Endothelial cell of umbilical vein (primary cell): ENCODE measurements at regions of chr14 and their contacts with region 1.

Region 1: DNA sequence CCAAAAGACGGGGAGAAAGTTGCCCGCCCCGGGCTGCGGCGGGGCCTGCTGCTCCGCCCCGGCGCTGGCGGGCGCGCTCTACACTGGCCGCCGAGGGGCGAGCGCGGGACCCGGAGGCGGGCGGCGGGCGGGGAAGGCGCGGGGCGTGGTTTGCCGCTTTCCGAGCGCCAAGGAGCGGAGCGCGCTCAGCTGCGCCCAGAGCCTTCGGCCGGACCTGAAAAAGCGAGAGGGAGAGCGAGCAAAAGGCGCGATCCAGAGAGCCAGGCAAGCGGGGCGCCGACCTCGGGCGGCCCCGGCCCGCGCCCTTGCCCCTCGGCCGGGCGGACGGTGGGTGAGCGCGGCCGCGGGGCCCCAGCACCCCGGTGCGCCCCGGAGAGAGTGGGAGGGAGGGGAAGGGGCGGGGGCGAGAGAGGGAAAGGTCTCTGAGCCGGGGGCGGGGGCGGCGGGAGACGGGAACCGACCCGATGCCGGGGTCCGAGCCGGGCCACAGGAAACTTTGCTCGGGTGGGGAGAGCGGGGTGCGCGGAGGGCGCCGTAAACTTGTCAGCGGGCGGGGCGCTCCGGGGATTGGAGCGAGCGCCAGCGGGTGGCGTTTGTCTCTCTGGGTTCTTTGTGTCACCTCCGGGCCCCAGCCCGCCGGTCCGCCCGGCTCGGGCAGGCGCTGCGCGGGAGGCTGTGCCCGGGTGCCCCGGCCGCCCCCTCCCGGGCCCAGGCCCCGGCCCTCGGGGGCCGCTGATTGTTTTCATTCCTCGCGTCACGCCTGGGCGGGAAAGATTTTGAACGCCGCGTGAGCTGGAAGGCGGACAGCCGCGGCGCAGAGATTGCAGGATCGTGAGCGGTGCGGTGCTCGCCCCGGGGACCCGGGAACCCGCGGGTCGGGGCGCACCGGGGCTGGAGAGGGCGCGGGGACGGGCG is at the start of gene SYNE2:
- DNase-seq: peak; percentile 78
- H3K4me3 ChIP-seq: peak within 1 kb of the TSS; percentile 66 to 77 (median 77)
- H3K27ac ChIP-seq: peak within 1 kb of the TSS; percentile 66
- H3K4me1 ChIP-seq: peaks cover 15% of the 10 kb centered on the region
- H3K27me3 ChIP-seq: no peaks in the 10 kb centered on the region
- CTCF ChIP-seq: peak in 1 of 2 donors; percentile 17
- POLR2A ChIP-seq: peak; percentile 14
- total RNA-seq, gene SYNE2: 42.7 and 53.7 TPM in 2 replicates

Region 2: GRCh38 chr14:63793376-63793775 is 59.7 kb before region 1 on chr14:
- CTCF ChIA-PET with region 1: no interaction called
- POLR2A ChIA-PET with region 1: no interaction called
- dilution Hi-C with region 1: no loop called
- intact Hi-C with region 1: no loop called
- DNase-seq: no peak
- H3K4me3 ChIP-seq: no peak overlapping the region
- H3K27ac ChIP-seq: no peak overlapping the region
- H3K4me1 ChIP-seq: no peaks in the 10 kb centered on the region
- H3K27me3 ChIP-seq: peaks cover 0 to 3% of the 10 kb centered on the region in 2 experiments
- CTCF ChIP-seq: no peak
- POLR2A ChIP-seq: no peak

Region 3: DNA sequence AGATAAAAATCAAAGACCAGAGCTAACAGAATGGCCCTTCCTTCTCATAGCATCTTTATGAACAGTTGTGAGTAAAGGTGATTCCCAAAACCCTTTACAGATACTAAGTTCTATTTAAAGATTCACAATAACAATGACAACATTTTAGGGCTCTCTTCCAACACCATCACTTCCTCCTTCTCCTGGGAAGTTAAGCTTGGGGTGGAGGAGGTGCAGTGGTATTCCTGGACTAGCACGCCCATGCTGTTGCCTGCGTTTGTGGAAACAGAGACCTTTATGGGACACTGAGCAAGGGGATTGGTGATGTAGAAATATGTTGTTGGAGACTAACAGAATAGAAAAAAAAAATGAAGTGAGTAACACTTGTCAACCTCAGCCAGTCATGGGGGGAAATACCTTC is 22.2 kb after region 1 on chr14:
- CTCF ChIA-PET with region 1: no interaction called
- POLR2A ChIA-PET with region 1: no interaction called
- dilution Hi-C with region 1: no loop called
- intact Hi-C with region 1: no loop called
- DNase-seq: peak; percentile 54
- H3K4me3 ChIP-seq: no peak overlapping the region
- H3K27ac ChIP-seq: no peak overlapping the region
- H3K4me1 ChIP-seq: peaks cover 8% of the 10 kb centered on the region
- H3K27me3 ChIP-seq: no peaks in the 10 kb centered on the region
- CTCF ChIP-seq: no peak
- POLR2A ChIP-seq: no peak

Region 4: GRCh38 chr14:63896278-63896720 is 43.2 kb after region 1 on chr14:
- CTCF ChIA-PET with region 1: interaction called, 4 read pairs
- POLR2A ChIA-PET with region 1: no interaction called
- dilution Hi-C with region 1: no loop called
- intact Hi-C with region 1: loop called (anchors 1 kb)
- DNase-seq: peak; percentile 99
- H3K4me3 ChIP-seq: peak overlapping the region in 1 of 3 experiments; percentile 28
- H3K27ac ChIP-seq: peak overlapping the region; percentile 57
- H3K4me1 ChIP-seq: peaks cover 34% of the 10 kb centered on the region
- H3K27me3 ChIP-seq: no peaks in the 10 kb centered on the region
- CTCF ChIP-seq: no peak
- POLR2A ChIP-seq: no peak

Region 5: GRCh38 chr14:63993992-63994391 is 140.9 kb after region 1 on chr14:
- CTCF ChIA-PET with region 1: interaction called, 4 read pairs
- POLR2A ChIA-PET with region 1: no interaction called
- dilution Hi-C with region 1: no loop called
- intact Hi-C with region 1: loop called (anchors 10 kb)
- DNase-seq: peak; percentile 16
- H3K4me3 ChIP-seq: no peak overlapping the region
- H3K27ac ChIP-seq: no peak overlapping the region
- H3K4me1 ChIP-seq: peaks cover 5% of the 10 kb centered on the region
- H3K27me3 ChIP-seq: no peaks in the 10 kb centered on the region
- CTCF ChIP-seq: no peak
- POLR2A ChIP-seq: no peak

Region 6: DNA sequence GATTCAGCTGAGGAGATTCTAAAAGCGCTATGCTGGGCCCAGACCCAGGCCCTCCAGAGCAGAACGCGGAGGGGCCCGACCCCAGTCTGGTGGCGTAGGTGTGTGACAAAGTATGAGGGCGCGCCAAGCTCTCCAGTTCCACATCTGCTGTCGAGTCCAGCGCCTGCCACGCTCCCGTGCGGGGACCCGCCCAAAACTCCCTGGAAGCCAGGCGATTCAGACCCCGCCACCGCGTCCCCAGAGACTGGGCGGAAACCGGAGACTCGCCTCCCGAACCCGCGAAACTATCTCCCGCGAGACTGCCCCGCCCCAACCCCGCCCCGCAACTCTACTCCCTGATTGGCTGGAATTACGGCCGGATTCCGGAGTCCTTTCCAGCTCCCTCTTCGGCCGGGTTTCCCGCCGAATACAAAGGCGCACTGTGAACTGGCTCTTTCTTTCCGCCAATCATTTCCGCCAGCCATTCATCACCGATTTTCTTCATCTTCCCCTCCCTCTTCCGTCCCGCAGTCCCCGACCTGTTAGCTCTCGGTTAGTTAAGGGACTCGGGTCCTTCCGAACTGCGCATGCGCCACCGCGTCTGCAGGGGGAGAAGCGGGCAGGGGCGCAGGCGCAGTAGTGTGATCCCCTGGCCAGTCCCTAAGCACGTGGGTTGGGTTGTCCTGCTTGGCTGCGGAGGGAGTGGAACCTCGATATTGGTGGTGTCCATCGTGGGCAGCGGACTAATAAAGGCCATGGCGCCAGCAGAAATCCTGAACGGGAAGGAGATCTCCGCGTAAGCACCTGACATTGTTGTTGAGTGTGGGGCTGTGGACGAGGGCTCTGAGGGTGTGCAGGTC is 534.8 kb after region 1 on chr14 and contains the start of gene MTHFD1:
- CTCF ChIA-PET with region 1: no interaction called
- POLR2A ChIA-PET with region 1: no interaction called
- dilution Hi-C with region 1: no loop called
- intact Hi-C with region 1: loop called (anchors 10 kb)
- DNase-seq: peak; percentile 99
- H3K4me3 ChIP-seq: peak within 1 kb of the TSS; percentile 56 to 94 (median 88)
- H3K27ac ChIP-seq: peak within 1 kb of the TSS; percentile 68
- H3K4me1 ChIP-seq: peaks cover 16% of the 10 kb centered on the region
- H3K27me3 ChIP-seq: no peaks in the 10 kb centered on the region
- CTCF ChIP-seq: no peak
- POLR2A ChIP-seq: peak; percentile 48
- total RNA-seq, gene MTHFD1: 104 and 114 TPM in 2 replicates